Activated B cell treated with CpG ODN at 0.5 μM for 24 hours (primary cell): ENCODE measurements at regions of chr17 and their contacts with region 1.

Region 1: DNA sequence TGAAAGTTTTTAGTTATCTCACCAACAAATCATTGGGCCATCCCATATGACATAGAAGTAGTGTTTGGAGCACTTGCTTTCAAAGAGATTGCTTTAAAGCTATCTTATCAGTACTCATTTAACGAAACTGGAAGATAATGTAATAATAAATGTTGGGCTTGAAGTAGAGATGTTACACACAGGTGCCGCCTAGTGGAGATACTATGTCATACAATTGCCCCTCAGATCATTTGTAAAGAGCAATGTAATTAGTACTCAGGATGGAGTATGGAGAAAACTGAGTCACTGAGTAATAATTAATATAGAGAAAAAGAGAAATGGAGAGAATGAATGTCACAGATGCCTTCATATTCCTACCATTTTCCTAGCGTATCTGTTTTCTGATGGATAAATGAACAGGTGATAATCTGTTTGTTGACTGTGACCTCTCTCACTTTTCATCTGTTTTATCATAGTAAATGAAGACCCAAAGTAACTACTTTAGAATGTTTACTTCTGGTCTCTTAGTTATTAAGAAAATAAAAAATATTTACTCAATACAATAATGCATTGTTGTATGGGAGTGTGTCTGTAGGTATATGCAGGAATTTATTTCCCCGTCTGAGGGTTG is 80.4 kb downstream of the EFCAB5 start:
- DNase-seq: no peak
- ATAC-seq: peak; percentile 66
- H3K4me3 Mint-ChIP-seq: no peak overlapping the region
- H3K27ac Mint-ChIP-seq: no peak overlapping the region
- H3K4me1 Mint-ChIP-seq: no peaks in the 10 kb centered on the region
- H3K27me3 Mint-ChIP-seq: no peaks in the 10 kb centered on the region
- CTCF ChIP-seq: peak; percentile 83

Region 2: DNA sequence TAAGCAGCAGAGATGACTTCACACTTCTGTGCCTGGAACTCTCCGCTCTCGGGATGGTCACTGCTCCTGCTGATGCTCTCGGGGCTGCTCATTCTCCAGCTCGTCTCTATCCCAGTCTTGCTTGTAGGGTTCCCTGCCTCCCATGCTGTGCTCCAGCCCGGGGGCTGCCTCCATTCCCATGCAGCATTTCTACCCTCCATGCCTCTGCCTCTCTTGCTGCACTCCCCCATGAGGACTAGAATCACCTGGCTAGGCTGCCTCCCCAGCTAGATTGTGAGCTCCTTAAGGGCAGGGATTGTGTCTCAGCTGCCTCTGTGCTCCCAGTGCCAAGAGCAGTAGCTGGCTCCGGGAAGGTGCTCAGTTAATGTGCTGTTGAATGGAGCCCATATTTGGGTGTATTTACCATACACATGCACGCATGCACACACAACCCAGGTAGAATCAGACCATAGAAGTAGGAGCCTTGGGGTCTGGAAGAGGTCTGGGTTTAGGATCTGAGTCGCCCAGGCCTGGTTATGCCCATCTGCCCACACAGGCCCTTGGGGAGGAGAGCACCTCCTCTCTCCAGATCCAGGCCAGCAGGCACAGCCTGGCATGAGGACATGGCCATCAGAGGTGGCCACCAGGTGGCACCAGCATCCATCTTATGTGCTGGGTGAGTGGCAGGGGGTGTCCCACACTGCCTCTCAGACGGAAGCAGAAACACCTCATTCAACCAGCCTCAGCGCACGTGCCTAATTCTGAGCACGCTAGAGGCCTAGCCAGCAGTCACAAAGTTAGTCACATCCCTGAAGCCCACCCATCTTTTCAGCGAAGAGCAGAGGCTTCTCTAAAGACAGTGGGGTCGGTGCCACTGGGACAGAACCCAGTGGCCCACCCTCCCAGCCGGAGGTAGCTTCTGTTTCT is 441.7 kb before region 1 on chr17:
- CTCF ChIA-PET with region 1: interaction called, 3 read pairs
- POLR2A ChIA-PET with region 1: no interaction called
- intact Hi-C with region 1: loop called (anchors 1 kb)
- DNase-seq: peak; percentile 82
- ATAC-seq: peak; percentile 98
- H3K4me3 Mint-ChIP-seq: no peak overlapping the region
- H3K27ac Mint-ChIP-seq: peak overlapping the region; percentile 71
- H3K4me1 Mint-ChIP-seq: peaks cover 27% of the 10 kb centered on the region
- H3K27me3 Mint-ChIP-seq: no peaks in the 10 kb centered on the region
- CTCF ChIP-seq: no peak

Region 3: DNA sequence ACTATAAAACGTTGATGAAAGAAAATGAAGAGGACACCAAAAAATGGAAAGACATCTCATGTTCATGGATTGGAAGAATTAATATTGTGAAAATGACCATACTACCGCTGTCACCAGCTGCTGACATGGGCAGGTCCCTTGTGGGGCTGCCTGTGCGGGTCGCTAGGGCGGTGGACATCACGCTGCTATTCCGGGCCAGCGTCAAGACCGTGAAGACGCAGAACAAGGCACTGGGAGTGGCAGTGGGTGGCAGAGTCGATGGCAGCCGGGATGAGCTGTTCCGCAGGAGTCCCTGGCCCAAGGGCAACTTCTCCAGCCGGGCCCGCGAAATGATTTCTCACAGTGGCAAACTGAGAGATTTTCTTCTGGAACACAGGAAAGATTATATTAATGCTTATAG is 46.7 kb after region 1 on chr17:
- CTCF ChIA-PET with region 1: no interaction called
- POLR2A ChIA-PET with region 1: no interaction called
- intact Hi-C with region 1: no loop called
- DNase-seq: no peak
- ATAC-seq: no peak
- H3K4me3 Mint-ChIP-seq: no peak overlapping the region
- H3K27ac Mint-ChIP-seq: no peak overlapping the region
- H3K4me1 Mint-ChIP-seq: no peaks in the 10 kb centered on the region
- H3K27me3 Mint-ChIP-seq: peaks cover 18% of the 10 kb centered on the region
- CTCF ChIP-seq: no peak